ENCODE measurements at regions of chr5 and their contacts with region 1.

Region 1: DNA sequence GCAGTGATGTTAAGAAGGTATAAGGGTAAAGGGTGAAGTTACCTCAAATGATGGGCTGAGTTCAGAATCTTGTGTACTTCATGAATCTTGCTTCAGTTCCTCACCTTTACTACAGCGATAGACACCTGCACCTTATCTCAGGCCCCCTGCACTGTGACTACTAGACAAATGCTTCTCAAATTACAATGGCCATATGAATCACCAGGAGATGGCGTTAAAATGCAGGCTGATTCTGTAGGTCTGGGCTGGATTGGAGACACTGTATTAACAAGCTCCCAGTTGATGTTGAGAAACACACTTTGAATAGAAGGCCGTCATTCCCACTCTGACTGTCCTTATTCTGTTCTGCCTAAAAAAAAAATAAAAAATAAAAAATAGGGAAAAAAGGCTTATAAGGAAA is 29.8 kb downstream of the TARS1 start:
- DNase-seq: peak in 1 of 2 experiments; percentile 30
- H3K4me3 ChIP-seq: no peak overlapping the region
- H3K27ac ChIP-seq: no peak overlapping the region
- H3K4me1 ChIP-seq: no peaks in the 10 kb centered on the region
- H3K27me3 ChIP-seq: no peaks in the 10 kb centered on the region
- CTCF ChIP-seq: peak; percentile 48

Region 2: DNA sequence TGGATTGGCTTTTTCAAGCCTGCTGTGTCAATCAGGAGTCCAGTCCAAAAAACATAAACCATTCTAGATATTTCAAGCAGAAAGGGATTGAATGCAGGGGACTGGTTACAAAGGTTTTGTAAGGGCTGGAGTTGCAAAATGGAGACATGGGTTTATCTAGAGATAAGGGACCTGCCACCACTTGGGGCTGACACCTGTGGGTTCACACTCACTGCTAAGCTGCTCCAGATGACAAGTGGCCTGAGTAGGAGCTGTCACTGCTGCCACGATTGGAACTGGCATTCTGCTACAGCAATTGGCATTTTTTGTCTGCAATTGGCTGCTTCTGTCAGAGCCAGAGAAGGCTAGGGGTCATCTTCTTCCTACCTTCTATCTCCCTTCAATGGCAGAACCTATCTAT is 959.7 kb before region 1 on chr5:
- CTCF ChIA-PET with region 1: interaction called, 13 read pairs
- POLR2A ChIA-PET with region 1: no interaction called
- intact Hi-C with region 1: no loop called
- DNase-seq: no peak
- H3K4me3 ChIP-seq: no peak overlapping the region
- H3K27ac ChIP-seq: no peak overlapping the region
- H3K4me1 ChIP-seq: no peaks in the 10 kb centered on the region
- H3K27me3 ChIP-seq: peaks cover 57% of the 10 kb centered on the region
- CTCF ChIP-seq: no peak

Region 3: GRCh38 chr5:33482335-33482734 is 11.8 kb after region 1 on chr5:
- CTCF ChIA-PET with region 1: no interaction called
- POLR2A ChIA-PET with region 1: no interaction called
- intact Hi-C with region 1: no loop called
- DNase-seq: no peak
- H3K4me3 ChIP-seq: no peak overlapping the region
- H3K27ac ChIP-seq: no peak overlapping the region
- H3K4me1 ChIP-seq: no peaks in the 10 kb centered on the region
- H3K27me3 ChIP-seq: no peaks in the 10 kb centered on the region
- CTCF ChIP-seq: no peak

Region 4: DNA sequence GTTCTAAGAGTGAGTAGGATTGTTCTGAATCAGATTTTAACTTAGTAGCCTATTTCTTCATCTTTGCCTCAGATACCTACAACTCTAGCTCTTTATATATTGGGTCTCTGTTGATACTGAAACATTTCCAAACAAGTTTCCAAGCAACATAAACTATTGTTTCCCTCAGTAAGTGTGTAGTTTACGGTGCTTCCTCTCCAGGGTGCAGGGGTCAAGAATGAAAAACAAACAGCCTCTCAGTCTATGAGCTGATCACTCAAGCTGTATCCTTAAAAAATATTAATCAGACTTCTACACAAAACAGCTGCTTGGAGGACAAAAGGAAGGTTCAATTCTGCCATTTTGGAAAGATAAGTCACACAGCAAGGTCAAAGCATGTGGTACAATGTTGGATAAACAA is 346.2 kb after region 1 on chr5:
- CTCF ChIA-PET with region 1: no interaction called
- POLR2A ChIA-PET with region 1: interaction called, 10 read pairs
- intact Hi-C with region 1: no loop called
- DNase-seq: no peak
- H3K4me3 ChIP-seq: no peak overlapping the region
- H3K27ac ChIP-seq: peak overlapping the region; percentile 67
- H3K4me1 ChIP-seq: peaks cover 25% of the 10 kb centered on the region
- H3K27me3 ChIP-seq: no peaks in the 10 kb centered on the region
- CTCF ChIP-seq: no peak

Region 5: DNA sequence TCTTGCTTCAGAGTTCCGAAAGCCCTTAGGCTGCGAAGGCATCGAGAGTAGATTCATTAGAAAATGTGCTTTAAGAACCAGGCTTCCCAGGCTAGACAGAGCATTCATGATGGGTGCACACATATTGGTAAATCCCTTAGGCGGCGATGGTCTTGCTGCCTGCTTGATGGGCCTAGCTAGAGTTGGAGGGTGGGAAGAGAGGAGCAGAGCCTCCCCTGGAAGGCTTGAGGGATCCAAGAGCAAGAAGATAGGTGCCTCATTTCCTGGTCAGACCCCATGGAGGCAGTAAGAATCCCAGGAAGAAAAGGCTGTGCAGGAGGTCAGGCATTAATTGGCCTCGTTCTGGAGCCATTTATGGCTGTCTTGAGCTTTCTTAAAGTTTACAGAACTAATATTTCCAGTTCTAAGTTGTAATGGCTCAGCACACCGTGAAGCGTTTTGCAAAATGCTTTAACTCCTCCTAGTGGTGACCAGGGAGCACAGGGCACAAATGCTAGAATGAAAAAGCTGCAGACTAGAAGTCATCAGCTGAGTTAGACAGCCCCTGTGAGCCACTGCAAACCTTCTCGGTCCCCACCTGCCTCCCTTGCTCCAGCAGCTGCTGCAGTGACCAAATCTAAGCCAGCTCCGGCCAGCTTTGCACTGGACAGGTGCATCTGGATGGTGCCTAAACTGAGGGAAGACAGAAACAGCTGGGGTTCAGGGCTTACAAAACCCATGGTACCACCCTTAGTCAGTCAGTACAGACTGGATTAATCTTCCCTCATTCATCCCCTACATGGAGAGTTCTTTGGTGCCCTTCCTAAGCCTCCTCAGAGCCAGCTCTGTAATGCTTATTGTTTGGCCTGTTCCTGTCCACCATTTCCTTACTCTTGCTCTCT is 499.3 kb after region 1 on chr5:
- CTCF ChIA-PET with region 1: interaction called, 32 read pairs
- POLR2A ChIA-PET with region 1: no interaction called
- intact Hi-C with region 1: loop called (anchors 1 kb)
- DNase-seq: peak; percentile 59 to 64
- H3K4me3 ChIP-seq: no peak overlapping the region
- H3K27ac ChIP-seq: no peak overlapping the region
- H3K4me1 ChIP-seq: 0 out of 2 replicates have a peak, but pooled peaks cover 3% of the 10 kb centered on the region
- H3K27me3 ChIP-seq: no peaks in the 10 kb centered on the region
- CTCF ChIP-seq: peak; percentile 90

Measured in PC-9 (cell line).